ENCODE measurements at regions of chr1 and their contacts with region 1.

Region 1: DNA sequence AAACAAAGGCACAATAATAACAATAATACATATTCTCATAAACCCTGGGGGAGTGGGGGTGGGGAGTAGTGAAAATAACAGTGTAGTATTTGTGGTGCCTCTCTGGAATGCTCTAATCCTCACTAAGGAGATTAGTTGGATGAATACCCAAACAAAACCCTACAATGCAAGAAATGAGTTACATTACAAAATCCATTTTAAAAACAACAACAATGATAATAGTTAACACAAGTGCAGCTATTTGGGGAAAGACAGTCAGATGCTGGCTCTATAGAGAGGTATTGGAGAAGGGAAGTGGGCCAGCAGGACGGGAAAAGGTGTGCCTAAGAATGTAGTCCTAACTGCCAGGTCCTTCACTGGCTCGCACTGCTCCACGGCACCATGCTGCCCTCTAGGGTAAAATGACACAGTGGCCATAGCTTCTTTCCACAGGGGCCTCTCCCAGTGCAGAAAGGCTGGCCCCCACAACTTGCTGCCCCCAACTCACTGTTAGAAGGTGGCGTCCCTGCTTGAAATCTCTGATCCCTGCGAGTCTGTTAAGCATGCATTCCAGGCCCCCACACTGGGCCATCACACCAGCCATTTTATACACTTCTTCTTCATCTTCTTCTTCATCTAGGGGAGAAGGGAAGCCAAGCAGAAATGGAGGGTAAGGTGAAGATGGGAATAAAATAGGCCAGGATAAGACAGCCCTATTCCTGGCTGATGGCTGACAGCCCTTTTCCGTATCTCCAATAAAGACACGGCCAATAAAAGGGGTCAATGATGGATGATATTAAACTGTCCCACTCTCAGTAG is 113.8 kb downstream of the UBR4 start:
- DNase-seq: no peak

Region 2: DNA sequence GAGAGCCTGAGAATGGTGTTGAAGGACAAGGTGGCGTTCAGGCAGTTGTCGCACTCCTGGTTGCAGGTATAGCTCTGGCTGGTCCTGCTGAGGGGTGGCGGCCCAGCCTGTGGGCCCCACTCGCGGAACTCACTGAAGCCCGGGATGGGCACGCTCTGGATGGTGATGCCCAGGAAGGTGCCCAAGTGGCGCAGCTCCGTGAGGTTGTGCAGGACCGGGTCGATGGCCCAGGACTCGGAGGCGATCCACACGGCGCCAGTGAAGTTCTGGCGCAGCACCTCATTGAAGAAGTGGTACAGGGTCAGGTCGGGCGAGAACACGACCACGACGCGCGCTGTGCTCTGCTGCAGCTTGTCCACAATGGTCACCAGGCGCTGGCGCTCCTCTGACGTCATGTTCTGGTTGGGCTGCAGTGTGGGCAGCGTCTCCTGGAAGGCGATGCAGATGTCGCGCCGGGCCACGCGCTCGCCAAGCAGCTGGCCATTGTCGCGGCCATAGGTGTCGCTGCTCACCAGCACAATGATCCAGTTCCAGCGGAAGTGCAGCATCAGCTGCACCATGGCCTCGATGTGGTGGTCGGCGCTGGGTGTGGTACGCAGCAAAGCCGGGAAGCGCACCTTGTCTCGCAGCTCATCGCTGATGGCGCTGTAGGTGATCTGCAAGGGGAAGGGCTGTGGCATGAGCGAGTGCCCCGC is 241.8 kb before region 1 on chr1:
- intact Hi-C with region 1: no loop called
- DNase-seq: no peak

Region 3: DNA sequence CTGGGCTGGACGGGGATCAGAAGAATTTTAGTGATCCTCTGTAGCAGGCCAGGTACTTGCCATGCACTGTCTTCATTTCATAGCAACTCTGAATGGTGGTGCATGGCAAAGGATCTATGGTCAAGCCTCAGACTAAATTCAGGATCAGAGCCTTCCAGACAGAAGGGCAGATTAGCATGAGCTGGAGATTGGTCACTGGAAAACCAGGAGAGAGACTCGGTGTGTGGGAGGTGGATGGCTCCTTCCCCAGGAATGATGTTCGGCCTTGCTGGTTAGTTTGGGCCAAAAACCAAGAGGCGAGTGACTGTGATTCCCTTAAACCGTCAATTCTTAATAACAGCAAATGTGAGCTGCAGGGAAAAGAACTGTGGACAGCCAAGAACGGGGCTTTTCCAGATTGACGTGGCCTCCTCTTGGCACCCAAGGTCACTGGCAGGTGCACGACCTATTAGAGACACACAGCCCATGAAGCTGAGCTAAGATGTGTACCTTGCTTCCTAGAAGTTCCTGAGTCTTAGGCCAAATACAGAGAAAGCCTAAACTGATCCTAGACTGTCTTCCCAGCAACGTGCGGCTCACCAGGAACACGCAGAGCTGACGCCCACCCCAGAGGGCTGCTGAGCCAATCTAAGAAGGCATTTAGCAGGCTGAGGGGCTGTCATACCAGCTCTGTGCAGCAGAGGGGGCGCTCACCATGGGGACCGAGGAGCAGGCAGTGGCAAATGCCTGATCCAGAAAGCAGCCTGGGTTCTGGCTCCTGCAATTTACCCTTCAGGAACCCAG is 212.4 kb before region 1 on chr1:
- intact Hi-C with region 1: loop called (anchors 5 kb)
- DNase-seq: no peak